ENCODE measurements at regions of chr7 and their contacts with region 1.

Region 1: DNA sequence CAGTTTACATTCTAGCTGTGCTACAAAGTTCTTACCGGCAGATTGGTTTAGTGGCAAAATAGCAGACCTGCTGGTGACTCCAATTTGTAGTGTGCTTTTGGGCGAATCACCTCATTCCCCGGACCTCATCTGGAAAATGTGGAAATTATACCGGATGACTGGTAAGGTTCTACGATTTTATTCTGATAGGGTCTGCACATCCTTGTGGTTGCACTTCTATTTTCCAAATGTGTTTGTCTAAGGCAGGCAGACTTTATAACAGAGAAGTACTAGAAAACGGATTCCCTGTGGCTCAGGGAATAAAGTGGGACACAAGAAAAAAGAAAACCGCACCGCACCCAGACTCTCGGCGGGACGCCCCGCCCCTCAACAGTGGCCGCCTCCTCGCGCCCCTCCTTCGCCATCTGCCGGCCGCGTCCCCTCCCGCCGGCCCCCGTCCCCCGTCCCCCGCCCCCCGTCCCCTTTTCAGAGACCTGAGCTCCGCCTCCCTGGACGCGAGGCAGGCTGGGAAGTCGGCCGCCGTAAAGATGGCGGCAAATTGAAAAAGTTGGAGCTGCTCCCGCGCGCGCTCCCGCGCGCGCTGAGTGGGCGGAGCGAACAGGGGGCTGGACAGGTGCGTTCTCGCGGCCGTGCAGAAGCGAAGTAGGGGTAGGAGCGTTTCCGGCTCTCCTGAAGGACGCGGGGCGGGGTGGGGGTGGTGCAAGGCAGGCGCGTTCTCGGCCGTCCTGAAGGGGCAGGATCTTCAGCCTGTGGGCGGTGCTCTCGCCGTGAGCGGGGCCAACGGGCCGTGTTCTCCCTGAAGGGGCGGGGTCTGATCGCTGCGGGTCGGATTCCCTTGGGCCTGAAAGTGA is 531 bp upstream of the CCM2 start:
- DNase-seq: peak; percentile 96

Region 2: DNA sequence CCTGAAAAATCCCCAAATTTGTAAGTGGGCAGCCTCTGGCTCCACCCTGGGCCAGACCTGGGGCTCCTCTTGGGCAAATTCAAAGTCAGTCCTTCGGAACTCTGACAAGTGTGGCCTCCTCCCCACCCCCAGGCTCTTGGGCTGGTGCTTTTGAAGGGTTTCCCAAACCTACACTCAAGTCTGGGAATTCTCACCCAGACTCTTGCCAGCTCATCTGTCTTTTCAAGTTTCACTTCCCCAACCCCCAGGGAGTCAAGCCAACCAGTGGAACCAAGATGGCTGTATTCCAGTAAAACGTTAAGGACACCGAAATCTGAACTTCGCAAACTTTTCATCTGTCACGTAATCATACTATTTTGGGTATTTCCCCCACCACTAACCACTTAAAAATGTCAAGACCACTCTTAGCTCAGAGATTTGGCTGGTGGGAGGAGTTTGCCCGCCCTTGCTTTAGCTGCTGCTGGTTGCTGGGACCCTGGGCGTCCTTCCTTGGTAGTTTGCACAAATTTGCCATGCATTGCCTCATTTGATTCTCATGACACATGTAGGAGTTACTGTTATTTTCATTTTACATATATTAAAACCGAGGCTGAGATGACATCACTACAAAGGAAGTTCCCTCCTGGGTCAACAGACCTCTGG is 19.0 kb before region 1 on chr7:
- CTCF ChIA-PET with region 1: no interaction called
- POLR2A ChIA-PET with region 1: interaction called, 30 read pairs
- DNase-seq: no peak

Region 3: DNA sequence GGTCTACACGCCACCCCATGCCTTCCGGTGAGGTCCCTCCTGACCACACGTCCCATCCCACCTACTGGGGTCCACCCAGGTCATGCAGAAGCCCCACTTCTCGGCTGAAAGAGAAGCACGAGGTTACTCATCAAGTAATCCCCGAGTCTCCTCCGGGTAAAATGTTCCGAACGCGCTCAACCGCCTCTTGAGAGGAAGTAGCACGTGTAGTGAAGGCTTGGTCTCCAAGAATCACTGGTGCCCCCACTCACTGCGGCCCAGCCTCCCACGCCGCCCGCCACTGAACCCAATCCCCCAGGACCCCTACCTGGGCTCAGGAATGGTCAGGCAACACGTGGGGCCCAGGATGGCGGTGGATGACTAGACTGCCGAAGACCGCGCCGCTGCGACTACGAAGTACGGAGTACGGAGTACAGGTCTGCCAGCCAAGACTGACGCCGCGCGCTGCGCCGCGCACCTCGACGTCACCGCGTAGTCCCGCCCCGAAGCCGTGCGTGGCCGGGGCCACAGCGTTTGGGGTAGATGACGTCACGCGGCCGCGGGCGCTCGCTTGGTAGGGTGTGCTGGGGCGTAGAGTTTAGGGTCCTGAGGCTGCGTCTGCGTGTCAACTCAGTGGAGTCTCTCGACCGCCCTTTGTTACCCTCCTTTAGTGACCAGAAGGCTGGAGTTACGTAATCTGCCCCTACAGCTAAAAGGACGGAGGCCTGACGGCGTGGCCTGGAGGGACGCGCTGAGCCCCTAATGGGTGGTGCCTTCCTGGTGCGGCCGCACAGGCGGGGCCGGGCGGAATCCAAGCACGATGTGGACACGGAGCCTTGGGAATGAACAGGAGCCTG is 13.0 kb before region 1 on chr7:
- CTCF ChIA-PET with region 1: interaction called, 3 read pairs
- POLR2A ChIA-PET with region 1: interaction called, 30 read pairs
- DNase-seq: peak; percentile 93